ENCODE measurements at regions of chr2 and their contacts with region 1.

Region 1: DNA sequence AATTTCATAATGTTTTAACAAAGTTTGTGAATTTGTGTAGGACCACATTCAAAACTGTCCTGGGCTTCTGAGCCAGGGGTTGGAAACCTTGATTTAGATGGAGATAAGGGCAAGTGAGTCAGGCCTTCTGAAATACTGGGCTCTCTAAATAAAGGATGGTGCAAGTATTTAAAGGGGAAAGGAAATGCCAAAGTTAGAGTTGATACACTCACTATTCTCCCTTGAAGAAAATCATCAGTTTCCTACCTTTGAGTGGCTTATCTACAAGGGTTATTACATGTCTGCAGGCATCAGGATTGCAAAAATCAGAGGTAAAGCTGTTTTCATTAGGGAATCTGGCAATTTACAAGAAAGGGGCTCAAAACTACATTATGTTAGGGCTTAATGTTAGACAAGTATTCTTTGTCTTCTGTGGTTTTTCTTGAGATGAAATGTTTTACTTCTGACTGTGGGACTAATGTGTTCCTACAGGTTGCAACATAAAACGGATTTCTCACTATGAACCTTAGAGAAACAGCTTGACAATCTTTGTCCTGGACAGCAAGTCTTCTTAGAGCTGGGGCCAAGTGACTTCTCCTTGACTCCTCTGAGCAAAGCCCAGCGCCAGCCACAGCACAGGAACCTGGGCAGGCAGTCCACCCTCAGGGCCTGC is 31.1 kb downstream of the RNU4ATAC start:
- DNase-seq: no peak
- H3K4me3 ChIP-seq: no peak overlapping the region
- H3K27ac ChIP-seq: no peak overlapping the region
- H3K4me1 ChIP-seq: peaks cover 12% of the 10 kb centered on the region
- CTCF ChIP-seq: no peak

Region 2: GRCh38 chr2:121547646-121548045 is 14.1 kb before region 1 on chr2:
- CTCF ChIA-PET with region 1: interaction called, 13 read pairs
- POLR2A ChIA-PET with region 1: interaction called, 7 read pairs
- intact Hi-C with region 1: no loop called
- DNase-seq: peak; percentile 41
- H3K4me3 ChIP-seq: no peak overlapping the region
- H3K27ac ChIP-seq: peak overlapping the region; percentile 28
- H3K4me1 ChIP-seq: peaks cover 20% of the 10 kb centered on the region
- CTCF ChIP-seq: no peak

Region 3: DNA sequence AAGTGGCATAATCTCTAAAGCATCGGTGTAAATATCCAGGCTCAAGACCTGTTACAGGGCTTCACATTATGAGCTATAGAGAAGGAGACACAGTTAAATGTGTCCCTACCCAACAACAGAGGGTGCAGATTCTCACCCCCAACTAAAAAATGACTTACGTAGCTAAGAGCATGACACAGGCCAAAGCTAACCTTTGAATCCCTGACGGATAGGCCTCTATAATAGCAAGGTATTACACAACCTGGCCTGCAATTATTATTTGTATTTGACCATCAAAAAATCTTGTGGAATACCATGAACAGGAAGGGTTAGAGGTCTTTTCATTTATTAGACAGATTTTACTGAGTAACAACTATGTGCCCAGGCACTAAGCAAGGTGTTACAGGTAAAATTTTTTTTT is 14.1 kb after region 1 on chr2:
- CTCF ChIA-PET with region 1: no interaction called
- POLR2A ChIA-PET with region 1: interaction called, 10 read pairs
- intact Hi-C with region 1: no loop called
- DNase-seq: no peak
- H3K4me3 ChIP-seq: no peak overlapping the region
- H3K27ac ChIP-seq: no peak overlapping the region
- H3K4me1 ChIP-seq: no peaks in the 10 kb centered on the region
- CTCF ChIP-seq: no peak

Region 4: GRCh38 chr2:121596221-121597080 is 34.7 kb after region 1 on chr2:
- CTCF ChIA-PET with region 1: no interaction called
- POLR2A ChIA-PET with region 1: no interaction called
- intact Hi-C with region 1: no loop called
- DNase-seq: peak; percentile 80
- H3K4me3 ChIP-seq: peak overlapping the region; percentile 60
- H3K27ac ChIP-seq: peak overlapping the region; percentile 85
- H3K4me1 ChIP-seq: peaks cover 36% of the 10 kb centered on the region
- CTCF ChIP-seq: peak; percentile 84

Region 5: DNA sequence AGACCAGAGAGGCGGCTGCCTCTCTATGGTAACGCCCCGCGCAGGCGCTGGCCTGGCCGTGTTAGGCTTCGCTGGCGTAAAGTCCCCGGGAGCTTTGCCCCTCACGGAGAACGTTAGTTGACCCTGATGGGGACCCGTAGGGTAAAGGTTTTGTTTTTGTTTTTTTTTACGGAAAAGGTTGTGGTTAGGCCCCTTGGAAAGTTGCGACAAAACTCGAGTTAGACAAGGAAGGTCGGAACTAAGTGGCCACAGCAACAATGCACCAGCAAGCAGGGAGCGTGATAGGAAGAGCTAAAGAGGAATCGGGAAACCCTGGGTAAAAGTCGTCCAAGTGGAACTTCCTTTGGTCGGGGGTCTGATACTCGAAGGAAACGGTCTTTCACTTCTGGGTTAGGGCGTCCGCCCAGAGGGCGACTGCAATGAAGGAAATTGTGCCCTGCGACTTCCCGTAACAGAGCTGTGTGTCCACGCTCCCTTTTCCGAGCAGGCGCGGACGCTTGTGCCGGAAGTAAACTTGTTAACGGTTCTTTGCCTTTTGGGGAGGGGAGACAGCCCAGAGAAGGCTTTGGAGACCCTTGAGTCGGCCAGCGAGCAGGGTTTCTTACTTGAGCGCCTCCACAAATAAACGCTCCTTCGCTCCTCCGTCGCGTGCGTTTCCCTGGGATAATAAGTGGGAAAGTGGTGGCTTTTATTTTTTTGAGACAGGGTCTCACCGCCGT is 88.0 kb after region 1 on chr2:
- CTCF ChIA-PET with region 1: no interaction called
- POLR2A ChIA-PET with region 1: no interaction called
- intact Hi-C with region 1: loop called (anchors 5 kb)
- DNase-seq: peak; percentile 97
- H3K4me3 ChIP-seq: peak overlapping the region; percentile 90
- H3K27ac ChIP-seq: peak overlapping the region; percentile 85
- H3K4me1 ChIP-seq: peaks cover 38% of the 10 kb centered on the region
- CTCF ChIP-seq: no peak

Region 6: DNA sequence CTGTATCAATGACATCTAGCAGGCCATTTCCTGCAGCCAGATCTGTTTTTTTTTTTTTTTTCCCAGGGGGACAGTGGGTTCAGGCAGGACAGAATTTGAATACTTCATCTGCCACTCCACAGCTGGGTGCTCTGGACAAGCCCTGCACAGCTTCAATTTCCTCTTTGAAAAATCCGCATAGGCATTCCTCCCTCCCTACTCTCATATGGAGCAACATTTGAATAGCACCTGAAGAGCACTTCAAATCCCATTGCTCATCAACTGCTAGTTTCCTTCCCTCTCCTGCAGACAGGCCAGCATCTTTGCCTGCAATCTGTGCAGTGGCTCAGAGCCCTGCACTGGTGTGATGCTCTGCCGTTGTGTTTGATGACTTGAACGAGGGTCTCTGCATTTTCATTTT is 520.0 kb after region 1 on chr2:
- CTCF ChIA-PET with region 1: no interaction called
- POLR2A ChIA-PET with region 1: no interaction called
- intact Hi-C with region 1: no loop called
- DNase-seq: no peak
- H3K4me3 ChIP-seq: no peak overlapping the region
- H3K27ac ChIP-seq: no peak overlapping the region
- H3K4me1 ChIP-seq: no peaks in the 10 kb centered on the region
- CTCF ChIP-seq: no peak